ENCODE measurements at regions of chr1 and their contacts with region 1.

Region 1: DNA sequence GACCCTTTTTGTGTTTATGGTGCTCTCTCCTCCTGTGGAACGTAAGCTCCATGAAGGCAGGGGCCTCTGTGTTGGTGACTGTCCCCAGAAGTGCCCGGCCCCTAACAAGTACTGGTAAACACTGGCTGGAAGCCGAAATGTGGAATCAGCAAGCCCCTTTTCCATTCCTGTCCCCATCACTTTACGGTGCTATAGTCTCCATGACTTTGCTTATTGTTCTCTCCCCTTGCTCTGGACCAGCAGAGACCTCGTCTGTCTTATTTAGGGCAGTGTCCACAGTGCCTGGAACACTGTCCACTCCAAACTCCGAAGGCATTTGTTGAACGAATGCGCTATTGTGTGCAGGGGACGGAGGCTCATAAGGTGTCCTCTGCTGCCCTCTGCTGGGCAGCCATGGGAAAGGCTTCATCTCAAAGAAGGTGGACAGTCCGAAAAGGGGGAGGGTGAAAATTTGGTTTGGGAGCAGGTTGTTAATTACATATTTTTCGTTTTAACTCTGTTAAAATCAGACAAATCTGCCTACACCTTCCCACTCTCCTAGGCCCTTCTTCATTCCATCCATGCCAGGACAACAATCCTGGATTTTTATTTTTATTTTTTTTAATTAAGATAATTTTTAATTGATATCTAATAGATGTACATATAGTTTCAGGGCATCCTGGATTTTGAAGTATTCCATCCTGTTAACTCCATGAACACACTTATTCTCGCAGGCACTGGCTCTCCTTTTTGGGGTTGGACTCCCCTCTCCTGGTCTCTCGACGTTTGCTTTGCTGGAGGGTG is 115.6 kb downstream of the PGBD5 start:
- DNase-seq: peak; percentile 81 to 91
- ATAC-seq: peak; percentile 93
- H3K4me3 ChIP-seq: no peak overlapping the region
- H3K27ac ChIP-seq: no peak overlapping the region
- H3K4me1 ChIP-seq: peaks cover 0 to 2% of the 10 kb centered on the region in 2 donors
- H3K27me3 ChIP-seq: no peaks in the 10 kb centered on the region

Region 2: GRCh38 chr1:229661022-229661877 is 649.3 kb before region 1 on chr1:
- intact Hi-C with region 1: loop called (anchors 1 to 2 kb)
- DNase-seq: peak; percentile 86 to 93
- ATAC-seq: peak; percentile 90
- H3K4me3 ChIP-seq: no peak overlapping the region
- H3K27ac ChIP-seq: no peak overlapping the region
- H3K4me1 ChIP-seq: no peaks in the 10 kb centered on the region
- H3K27me3 ChIP-seq: no peaks in the 10 kb centered on the region

Region 3: GRCh38 chr1:230335861-230336522 is 25.4 kb after region 1 on chr1:
- intact Hi-C with region 1: no loop called
- DNase-seq: peak in 1 of 2 donors; percentile 26
- ATAC-seq: no peak
- H3K4me3 ChIP-seq: no peak overlapping the region
- H3K27ac ChIP-seq: no peak overlapping the region
- H3K4me1 ChIP-seq: no peaks in the 10 kb centered on the region
- H3K27me3 ChIP-seq: no peaks in the 10 kb centered on the region